Panc1 (cell line): ENCODE measurements at regions of chr11 and their contacts with region 1.

Region 1: DNA sequence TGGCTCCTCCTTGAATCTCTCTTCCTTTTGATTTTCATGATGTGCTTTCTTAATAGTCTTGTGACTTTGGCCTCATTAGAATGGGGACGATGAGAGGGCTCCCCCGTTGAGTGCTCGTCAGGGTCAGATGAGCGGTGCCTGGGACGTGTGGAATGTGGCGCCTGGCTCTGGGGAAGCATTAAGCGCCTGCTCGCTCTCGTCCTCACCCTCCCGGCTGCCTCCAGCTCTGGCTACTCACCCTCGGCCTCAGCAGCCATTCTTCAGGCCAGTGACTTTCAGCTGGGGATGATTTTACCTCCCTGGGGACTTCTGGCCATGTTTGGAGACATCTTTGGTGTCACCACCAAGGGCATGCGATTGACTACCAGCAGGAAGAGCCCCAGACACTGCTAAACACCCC is 69.7 kb downstream of the RPS6KA4 start:
- DNase-seq: no peak
- ATAC-seq: no peak
- H3K4me3 ChIP-seq: no peak overlapping the region
- H3K27ac ChIP-seq: no peak overlapping the region
- H3K4me1 ChIP-seq: no peaks in the 10 kb centered on the region
- H3K27me3 ChIP-seq: no peaks in the 10 kb centered on the region
- CTCF ChIP-seq: no peak

Region 2: GRCh38 chr11:64499261-64500004 is 70.7 kb after region 1 on chr11:
- CTCF ChIA-PET with region 1: no interaction called
- POLR2A ChIA-PET with region 1: no interaction called
- in situ Hi-C with region 1: loop called (anchors 5 kb)
- intact Hi-C with region 1: no loop called
- DNase-seq: no peak
- ATAC-seq: no peak
- H3K4me3 ChIP-seq: no peak overlapping the region
- H3K27ac ChIP-seq: no peak overlapping the region
- H3K4me1 ChIP-seq: no peaks in the 10 kb centered on the region
- H3K27me3 ChIP-seq: peaks cover 4% of the 10 kb centered on the region
- CTCF ChIP-seq: no peak

Region 3: DNA sequence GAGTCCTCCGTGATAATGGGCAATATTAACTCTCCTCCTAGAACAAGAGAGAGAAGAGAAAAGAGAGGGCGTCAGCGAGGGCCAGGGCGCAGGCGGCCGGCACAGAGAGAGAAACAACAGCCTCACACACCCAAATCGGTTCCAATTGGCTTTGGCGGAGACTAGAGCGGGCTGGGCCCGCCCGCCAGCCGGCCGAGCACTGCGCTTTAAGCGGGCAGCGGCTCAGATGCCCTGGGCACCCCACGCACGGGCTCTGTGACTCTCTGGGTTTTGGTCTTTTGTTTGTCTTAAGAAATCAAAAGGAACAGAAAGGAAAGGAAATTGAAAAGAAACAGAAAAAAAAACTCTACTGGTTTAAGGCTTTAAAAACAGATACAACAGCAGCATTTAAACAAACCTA is 179.4 kb after region 1 on chr11:
- CTCF ChIA-PET with region 1: no interaction called
- POLR2A ChIA-PET with region 1: interaction called, 12 read pairs
- in situ Hi-C with region 1: no loop called
- intact Hi-C with region 1: no loop called
- DNase-seq: no peak
- ATAC-seq: no peak
- H3K4me3 ChIP-seq: no peak overlapping the region
- H3K27ac ChIP-seq: no peak overlapping the region
- H3K4me1 ChIP-seq: 0 out of 2 replicates have a peak, but pooled peaks cover 3% of the 10 kb centered on the region
- H3K27me3 ChIP-seq: no peaks in the 10 kb centered on the region
- CTCF ChIP-seq: no peak